Thyroid gland (tissue), 4 donors: ENCODE measurements at regions of chr6 and their contacts with region 1.

Region 1: GRCh38 chr6:73732845-73733675 is 37.1 kb downstream of the CD109 start:
- DNase-seq: peak; percentile 50 to 74
- H3K4me3 ChIP-seq: no peak overlapping the region
- H3K27ac ChIP-seq: no peak overlapping the region
- H3K4me1 ChIP-seq: no peaks in the 10 kb centered on the region
- H3K27me3 ChIP-seq: no peaks in the 10 kb centered on the region
- CTCF ChIP-seq: peak; percentile 69 to 89 (median 78)
- POLR2A ChIP-seq: no peak

Region 2: DNA sequence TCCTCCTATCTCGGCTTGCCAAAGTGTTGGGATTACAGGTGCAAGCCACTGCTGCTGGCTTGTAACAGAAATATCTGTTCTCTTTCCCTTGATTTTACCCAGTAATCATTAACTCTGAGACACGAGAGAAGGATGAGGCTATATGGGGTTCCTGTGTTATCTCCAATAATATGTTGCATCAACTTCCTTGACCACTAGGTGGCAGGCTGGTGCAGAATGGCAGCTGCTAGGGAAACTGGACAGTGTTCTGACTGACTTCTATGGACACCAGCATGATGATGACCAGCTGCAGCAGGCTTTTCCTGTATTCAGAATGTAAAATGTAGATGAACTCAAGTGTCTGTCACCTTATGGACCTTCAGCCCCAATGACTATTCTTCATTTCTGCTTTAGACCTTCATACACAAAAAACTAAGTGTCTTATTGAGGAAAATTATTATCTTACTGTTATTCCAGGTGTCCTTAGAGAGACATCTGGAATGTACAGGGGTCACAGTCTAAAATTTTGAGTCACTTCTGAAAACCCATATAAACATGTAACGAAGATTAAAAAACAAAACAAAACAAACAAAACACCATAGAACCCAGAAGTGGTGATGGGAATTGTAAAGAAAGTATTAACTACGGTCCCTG is 57.5 kb before region 1 on chr6:
- intact Hi-C with region 1: loop called (anchors 5 kb)
- DNase-seq: peak; percentile 66 to 76
- H3K4me3 ChIP-seq: no peak overlapping the region
- H3K27ac ChIP-seq: no peak overlapping the region
- H3K4me1 ChIP-seq: no peaks in the 10 kb centered on the region
- H3K27me3 ChIP-seq: no peaks in the 10 kb centered on the region
- CTCF ChIP-seq: peak; percentile 70 to 89 (median 83)
- POLR2A ChIP-seq: no peak

Region 3: GRCh38 chr6:73782911-73783310 is 49.9 kb after region 1 on chr6:
- intact Hi-C with region 1: no loop called
- DNase-seq: no peak
- H3K4me3 ChIP-seq: no peak overlapping the region
- H3K27ac ChIP-seq: no peak overlapping the region
- H3K4me1 ChIP-seq: no peaks in the 10 kb centered on the region
- H3K27me3 ChIP-seq: no peaks in the 10 kb centered on the region
- CTCF ChIP-seq: no peak
- POLR2A ChIP-seq: no peak

Region 4: DNA sequence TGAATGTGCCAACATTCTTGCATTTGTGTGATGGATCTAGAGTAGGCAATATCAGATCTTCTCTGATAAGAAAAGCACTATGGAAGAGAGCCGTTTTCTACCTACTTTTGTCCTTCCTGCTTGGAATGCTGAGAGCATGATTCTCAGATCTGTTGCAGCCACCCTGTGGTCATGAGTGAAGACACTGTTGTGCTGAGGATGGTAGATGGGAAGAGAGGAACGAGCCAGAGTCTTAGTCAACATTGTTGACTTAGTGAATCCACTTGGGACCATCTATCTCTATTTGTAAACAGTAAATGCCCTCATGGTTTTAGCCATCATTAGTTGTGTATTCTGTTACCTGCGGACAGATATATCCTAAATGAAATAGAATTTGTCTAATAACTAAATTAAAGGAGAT is 165.6 kb after region 1 on chr6:
- intact Hi-C with region 1: no loop called
- DNase-seq: no peak
- H3K4me3 ChIP-seq: no peak overlapping the region
- H3K27ac ChIP-seq: no peak overlapping the region
- H3K4me1 ChIP-seq: no peaks in the 10 kb centered on the region
- H3K27me3 ChIP-seq: no peaks in the 10 kb centered on the region
- CTCF ChIP-seq: no peak
- POLR2A ChIP-seq: no peak